IMR-90 (cell line): ENCODE measurements at regions of chr13 and their contacts with region 1.

Region 1: GRCh38 chr13:73464758-73465616 is 406.2 kb downstream of the KLF5 start:
- DNase-seq: no peak
- ATAC-seq: no peak
- H3K4me3 ChIP-seq: no peak overlapping the region
- H3K27ac ChIP-seq: no peak overlapping the region
- H3K4me1 ChIP-seq: peaks cover 6% of the 10 kb centered on the region
- H3K27me3 ChIP-seq: no peaks in the 10 kb centered on the region
- CTCF ChIP-seq: no peak
- POLR2A ChIP-seq: no peak
- RAD21 ChIP-seq: no peak

Region 2: DNA sequence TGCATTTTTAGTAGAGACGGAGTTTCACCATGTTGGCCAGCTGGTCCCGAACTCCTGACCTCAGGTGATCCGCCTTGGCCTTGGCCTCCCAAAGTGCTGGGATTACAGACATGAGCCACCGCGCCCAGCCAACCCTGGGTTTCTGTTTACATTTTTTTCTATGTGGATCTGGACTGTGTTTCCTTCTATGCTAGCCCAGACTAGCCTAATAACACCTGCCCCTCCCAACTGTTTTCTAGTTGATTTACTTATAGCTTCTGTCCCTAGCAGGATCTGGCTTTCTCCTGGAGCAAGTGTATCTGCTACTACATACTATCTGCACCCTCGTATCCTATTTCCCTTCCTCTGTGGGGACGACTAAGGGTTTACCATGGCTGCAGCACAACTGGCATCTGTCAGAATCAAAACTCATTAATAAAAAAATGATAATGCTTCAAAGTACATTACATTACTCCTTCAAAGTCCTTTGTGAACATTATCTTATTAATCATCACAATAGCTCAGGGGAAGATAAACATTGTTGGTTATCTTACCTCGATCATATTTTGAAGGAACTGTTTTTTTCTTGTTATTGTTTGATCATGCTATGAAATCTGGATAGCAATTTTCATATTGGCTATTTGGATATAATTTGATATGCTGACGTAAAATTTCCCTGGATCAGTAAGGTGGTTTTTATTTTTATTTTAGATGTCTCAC is 177.9 kb before region 1 on chr13:
- CTCF ChIA-PET with region 1: no interaction called
- POLR2A ChIA-PET with region 1: interaction called, 21 read pairs
- dilution Hi-C with region 1: no loop called
- in situ Hi-C with region 1: no loop called
- intact Hi-C with region 1: no loop called
- DNase-seq: no peak
- ATAC-seq: no peak
- H3K4me3 ChIP-seq: no peak overlapping the region
- H3K27ac ChIP-seq: no peak overlapping the region
- H3K4me1 ChIP-seq: no peaks in the 10 kb centered on the region
- H3K27me3 ChIP-seq: no peaks in the 10 kb centered on the region
- CTCF ChIP-seq: no peak
- POLR2A ChIP-seq: no peak
- RAD21 ChIP-seq: no peak